K562 (cell line): ENCODE measurements at regions of chr1 and their contacts with region 1.

Region 1: GRCh38 chr1:19240673-19241538 is 10.4 kb downstream of the EMC1 start:
- DNase-seq: peak; percentile 74 to 86 (median 76)
- ATAC-seq: peak; percentile 96
- H3K4me3 ChIP-seq: no peak overlapping the region
- H3K27ac ChIP-seq: no peak overlapping the region
- H3K4me1 ChIP-seq: no peaks in the 10 kb centered on the region; a peak in 1 of 5 replicates
- H3K27me3 ChIP-seq: no peaks in the 10 kb centered on the region
- CTCF ChIP-seq: peak; percentile 79 to 96 (median 90)
- EP300 ChIP-seq: no peak
- POLR2A ChIP-seq: no peak
- RAD21 ChIP-seq: peak; percentile 77 to 83

Region 2: GRCh38 chr1:18883636-18884418 is 357.1 kb before region 1 on chr1:
- CTCF ChIA-PET with region 1: interaction called, 6 read pairs
- POLR2A ChIA-PET with region 1: interaction called, 3 read pairs
- in situ Hi-C with region 1: loop called (anchors 10 kb)
- intact Hi-C with region 1: no loop called
- DNase-seq: peak; percentile 79 to 82 (median 82)
- ATAC-seq: peak; percentile 94
- H3K4me3 ChIP-seq: no peak overlapping the region
- H3K27ac ChIP-seq: no peak overlapping the region
- H3K4me1 ChIP-seq: peaks cover 0 to 15% of the 10 kb centered on the region in 2 experiments; a peak in 1 of 5 replicates
- H3K27me3 ChIP-seq: no peaks in the 10 kb centered on the region
- CTCF ChIP-seq: peak; percentile 93 to 98 (median 97)
- EP300 ChIP-seq: no peak
- POLR2A ChIP-seq: no peak
- RAD21 ChIP-seq: peak; percentile 90 to 97

Region 3: DNA sequence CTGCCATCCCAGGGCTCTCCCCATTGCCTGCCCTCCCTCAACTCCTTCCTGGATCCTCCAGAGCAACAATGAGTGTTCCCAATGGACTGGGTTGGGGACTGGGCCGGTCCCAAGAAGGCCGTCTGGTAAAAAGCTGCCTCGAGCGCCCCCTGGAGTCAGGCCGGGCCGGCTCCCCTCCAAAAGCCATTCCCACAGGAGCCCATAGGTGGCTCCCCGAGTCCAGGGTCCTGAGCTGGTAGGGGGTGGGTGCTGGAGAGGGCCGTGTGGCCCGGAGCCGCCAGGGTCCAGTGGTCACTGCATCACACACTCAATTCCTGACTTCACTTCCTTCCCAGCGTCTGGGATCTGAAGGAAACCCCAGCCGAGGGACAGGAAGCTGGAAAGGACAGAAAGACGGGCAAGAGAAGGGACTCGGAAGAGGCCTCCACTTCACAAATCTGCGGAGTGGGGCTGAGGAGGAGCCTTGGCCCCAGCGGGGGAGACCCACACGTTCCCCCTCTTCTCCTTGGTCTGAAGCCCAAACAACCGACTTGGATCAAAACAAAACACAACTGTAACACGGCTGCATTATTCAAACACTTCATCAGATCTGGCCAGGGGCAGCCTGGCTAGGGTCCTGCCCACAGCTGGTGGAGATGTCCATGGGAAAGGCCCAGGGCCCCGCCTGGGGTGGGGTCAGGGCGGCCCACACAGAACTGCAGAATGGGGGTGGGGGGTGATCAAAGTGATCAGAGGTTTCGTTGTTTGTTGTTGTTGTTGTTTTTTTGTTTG is 327.7 kb before region 1 on chr1:
- CTCF ChIA-PET with region 1: no interaction called
- POLR2A ChIA-PET with region 1: no interaction called
- in situ Hi-C with region 1: no loop called
- intact Hi-C with region 1: loop called (anchors 10 kb)
- DNase-seq: peak; percentile 89 to 95 (median 94)
- ATAC-seq: peak; percentile 92
- H3K4me3 ChIP-seq: no peak overlapping the region
- H3K27ac ChIP-seq: no peak overlapping the region
- H3K4me1 ChIP-seq: peaks cover 14 to 34% of the 10 kb centered on the region in 2 experiments
- H3K27me3 ChIP-seq: peaks cover 19 to 34% of the 10 kb centered on the region in 2 experiments
- CTCF ChIP-seq: peak; percentile 100
- EP300 ChIP-seq: no peak
- POLR2A ChIP-seq: no peak
- RAD21 ChIP-seq: peak; percentile 94 to 99

Region 4: DNA sequence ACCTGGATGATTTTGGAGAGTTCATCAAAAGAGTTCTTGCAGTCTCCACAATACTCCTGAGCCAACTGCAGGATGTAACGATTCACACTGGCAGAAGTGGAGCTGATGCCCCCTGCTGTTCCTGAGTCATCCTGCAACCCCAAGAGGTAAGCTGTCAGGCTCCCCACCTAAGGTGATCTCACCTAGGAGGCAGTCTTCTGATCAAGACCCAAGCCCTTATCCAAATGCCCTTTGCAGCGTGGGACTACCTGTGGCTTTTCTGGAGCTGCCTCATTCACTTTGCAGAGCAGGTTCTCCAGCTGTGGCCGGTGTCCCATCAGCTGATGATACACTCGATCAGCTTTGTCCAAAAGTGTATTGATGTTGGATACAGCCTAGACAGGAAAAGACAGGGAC is 127.2 kb before region 1 on chr1:
- CTCF ChIA-PET with region 1: no interaction called
- POLR2A ChIA-PET with region 1: no interaction called
- in situ Hi-C with region 1: no loop called
- intact Hi-C with region 1: loop called (anchors 10 kb)
- DNase-seq: peak; percentile 73 to 82 (median 75)
- ATAC-seq: peak; percentile 86
- H3K4me3 ChIP-seq: no peak overlapping the region
- H3K27ac ChIP-seq: no peak overlapping the region
- H3K4me1 ChIP-seq: peaks cover 7 to 17% of the 10 kb centered on the region in 2 experiments; a peak in 3 of 5 replicates
- H3K27me3 ChIP-seq: no peaks in the 10 kb centered on the region
- CTCF ChIP-seq: peak; percentile 66 to 77 (median 74)
- EP300 ChIP-seq: no peak
- POLR2A ChIP-seq: no peak
- RAD21 ChIP-seq: peak; percentile 57 to 68

Region 5: GRCh38 chr1:19251305-19252196 is 10.6 kb after region 1 on chr1 and contains the starts of genes EMC1 and MRTO4:
- CTCF ChIA-PET with region 1: no interaction called
- POLR2A ChIA-PET with region 1: interaction called, 20 read pairs
- in situ Hi-C with region 1: no loop called
- intact Hi-C with region 1: no loop called
- DNase-seq: peak; percentile 94 to 95 (median 94)
- ATAC-seq: peak; percentile 93
- H3K4me3 ChIP-seq: peak within 1 kb of the TSS; percentile 99
- H3K27ac ChIP-seq: peak within 1 kb of the TSS; percentile 99
- H3K4me1 ChIP-seq: peaks cover 14 to 21% of the 10 kb centered on the region in 2 experiments; a peak in 4 of 5 replicates
- H3K27me3 ChIP-seq: no peaks in the 10 kb centered on the region
- CTCF ChIP-seq: no peak
- EP300 ChIP-seq: no peak; the same call in 1 of the 2 replicates
- POLR2A ChIP-seq: peak; percentile 97
- RAD21 ChIP-seq: no peak
- polyA plus RNA-seq, gene EMC1: 32.1 to 69.3 TPM
- polyA plus RNA-seq, gene MRTO4: 62.0 to 146 TPM